Activated CD4-positive, alpha-beta memory T cell treated with anti-CD3 and anti-CD28 coated beads for 36 hours (primary cell): ENCODE measurements at regions of chr14 and their contacts with region 1.

Region 1: GRCh38 chr14:100375963-100376735 is 53.0 kb downstream of the SLC25A47 start:
- DNase-seq: peak; percentile 96
- H3K4me3 Mint-ChIP-seq: peak within 1 kb of the TSS; percentile 98
- H3K27ac Mint-ChIP-seq: peak within 1 kb of the TSS; percentile 100
- H3K4me1 Mint-ChIP-seq: peaks cover 47% of the 10 kb centered on the region
- H3K27me3 Mint-ChIP-seq: peaks cover 1% of the 10 kb centered on the region

Region 2: DNA sequence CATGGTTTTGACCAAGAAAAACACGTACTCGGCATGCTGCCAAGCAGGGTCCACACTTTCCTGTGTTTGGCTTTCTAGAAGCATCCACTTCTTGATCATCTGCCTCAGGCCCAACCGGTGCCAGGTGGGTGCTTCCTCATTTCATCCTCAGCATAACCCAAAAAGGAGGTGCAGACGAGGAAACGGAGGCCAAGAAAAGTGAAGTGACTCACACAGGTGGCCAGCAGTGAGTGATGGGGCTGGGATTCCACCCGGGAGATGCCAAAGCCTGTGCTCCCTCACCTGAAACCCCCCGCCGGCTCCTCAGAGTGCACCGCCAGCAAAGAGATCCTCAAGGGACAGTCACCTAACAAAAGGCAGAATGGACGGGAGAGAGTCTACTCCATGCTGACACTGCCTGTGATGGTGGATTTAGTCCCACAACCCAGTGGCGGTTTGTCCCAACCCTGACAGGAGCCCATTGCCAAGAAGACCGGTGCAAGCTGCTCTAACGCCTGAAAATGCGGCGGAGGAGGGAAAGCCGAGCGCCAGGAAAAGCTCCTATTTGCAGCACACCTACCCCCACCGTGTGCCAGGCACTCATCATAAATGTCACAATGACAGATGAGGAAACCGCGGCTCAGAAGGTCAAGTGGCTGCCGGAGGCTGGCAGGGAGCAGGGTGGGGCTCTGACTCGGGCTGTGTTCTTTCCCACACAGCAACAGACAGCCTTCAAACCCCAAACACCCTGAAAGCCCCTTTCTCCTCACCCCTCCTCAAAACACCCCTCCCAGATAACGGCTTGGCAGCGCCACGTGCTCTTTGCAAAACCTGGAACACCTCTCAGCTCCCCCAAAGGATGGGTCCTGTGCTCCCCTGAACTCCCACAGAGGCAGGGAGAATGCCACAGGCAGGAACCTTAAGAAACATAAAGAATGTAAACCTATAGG is 1122.9 kb before region 1 on chr14:
- CTCF ChIA-PET with region 1: no interaction called
- POLR2A ChIA-PET with region 1: no interaction called
- intact Hi-C with region 1: loop called (anchors 10 kb)
- DNase-seq: peak; percentile 77
- H3K4me3 Mint-ChIP-seq: peak overlapping the region; percentile 70
- H3K27ac Mint-ChIP-seq: peak overlapping the region; percentile 87
- H3K4me1 Mint-ChIP-seq: peaks cover 94% of the 10 kb centered on the region
- H3K27me3 Mint-ChIP-seq: no peaks in the 10 kb centered on the region

Region 3: GRCh38 chr14:100067971-100068959 is 307.9 kb before region 1 on chr14:
- CTCF ChIA-PET with region 1: interaction called, 3 read pairs
- POLR2A ChIA-PET with region 1: interaction called, 16 read pairs
- intact Hi-C with region 1: loop called (anchors 2 kb)
- DNase-seq: peak; percentile 95
- H3K4me3 Mint-ChIP-seq: peak overlapping the region; percentile 81
- H3K27ac Mint-ChIP-seq: peak overlapping the region; percentile 98
- H3K4me1 Mint-ChIP-seq: peaks cover 81% of the 10 kb centered on the region
- H3K27me3 Mint-ChIP-seq: no peaks in the 10 kb centered on the region

Region 4: GRCh38 chr14:100285021-100285912 is 90.9 kb before region 1 on chr14:
- CTCF ChIA-PET with region 1: interaction called, 19 read pairs
- POLR2A ChIA-PET with region 1: interaction called, 5 read pairs
- intact Hi-C with region 1: loop called (anchors 1 kb)
- DNase-seq: peak; percentile 83
- H3K4me3 Mint-ChIP-seq: peak overlapping the region; percentile 69
- H3K27ac Mint-ChIP-seq: no peak overlapping the region
- H3K4me1 Mint-ChIP-seq: peaks cover 6% of the 10 kb centered on the region
- H3K27me3 Mint-ChIP-seq: no peaks in the 10 kb centered on the region

Region 5: GRCh38 chr14:100362311-100362927 is 13.7 kb before region 1 on chr14:
- CTCF ChIA-PET with region 1: interaction called, 4 read pairs
- POLR2A ChIA-PET with region 1: interaction called, 12 read pairs
- intact Hi-C with region 1: no loop called
- DNase-seq: no peak
- H3K4me3 Mint-ChIP-seq: no peak overlapping the region
- H3K27ac Mint-ChIP-seq: no peak overlapping the region
- H3K4me1 Mint-ChIP-seq: peaks cover 48% of the 10 kb centered on the region
- H3K27me3 Mint-ChIP-seq: no peaks in the 10 kb centered on the region

Region 6: DNA sequence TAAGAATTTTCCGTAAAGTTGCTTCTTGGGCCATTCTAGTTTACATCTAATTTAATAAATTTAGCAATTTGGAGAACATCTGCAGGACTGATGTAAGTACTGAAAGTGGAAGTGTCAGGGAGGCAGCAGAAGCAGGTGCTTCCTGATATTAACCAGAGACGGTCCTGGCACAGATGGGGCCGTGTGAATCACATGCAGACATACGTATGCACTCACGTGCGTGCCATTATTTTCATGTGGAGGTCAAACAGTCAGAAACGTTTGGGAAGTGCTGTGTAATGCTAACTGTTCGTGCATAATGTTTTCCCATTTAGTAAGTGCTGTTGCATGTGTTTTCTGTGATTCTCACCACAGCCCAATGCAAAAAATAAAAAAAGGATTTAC is 1500.4 kb after region 1 on chr14:
- CTCF ChIA-PET with region 1: no interaction called
- POLR2A ChIA-PET with region 1: no interaction called
- intact Hi-C with region 1: loop called (anchors 5 kb)
- DNase-seq: peak; percentile 87
- H3K4me3 Mint-ChIP-seq: peak overlapping the region; percentile 56
- H3K27ac Mint-ChIP-seq: peak overlapping the region; percentile 84
- H3K4me1 Mint-ChIP-seq: peaks cover 91% of the 10 kb centered on the region
- H3K27me3 Mint-ChIP-seq: no peaks in the 10 kb centered on the region